ENCODE measurements at regions of chr1 and their contacts with region 1.

Region 1: DNA sequence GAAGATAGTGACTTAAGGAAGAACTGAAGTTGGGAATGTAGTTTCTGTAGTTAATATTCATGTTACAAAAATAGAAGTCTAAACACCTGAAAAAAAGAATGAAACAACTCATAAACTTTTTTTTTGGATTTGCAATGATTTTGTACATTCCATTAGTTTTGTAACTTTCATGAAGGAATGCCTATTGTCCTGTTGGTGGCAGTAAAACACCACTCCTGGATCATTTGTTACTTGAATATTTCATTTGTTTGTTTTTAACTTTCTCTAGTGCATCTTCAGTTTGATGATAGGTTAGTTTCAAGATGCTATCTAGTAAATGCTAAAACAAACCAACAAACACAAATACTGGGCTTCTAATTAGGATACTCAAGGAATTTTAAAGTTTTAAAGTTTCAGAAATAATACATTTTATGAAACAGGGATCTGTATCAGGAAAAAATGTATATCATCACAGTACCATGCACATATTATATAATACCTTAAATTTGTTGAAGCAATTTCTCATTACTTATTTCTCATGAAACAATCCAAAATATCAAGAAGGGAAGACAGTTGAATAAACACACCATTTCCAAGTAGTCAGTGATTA is 229.7 kb upstream of the CACYBP start:
- DNase-seq: no peak
- ATAC-seq: no peak
- H3K4me3 ChIP-seq: no peak overlapping the region
- H3K27ac ChIP-seq: no peak overlapping the region
- H3K4me1 ChIP-seq: no peaks in the 10 kb centered on the region
- H3K27me3 ChIP-seq: no peaks in the 10 kb centered on the region

Region 2: GRCh38 chr1:174626031-174627025 is 143.7 kb before region 1 on chr1:
- intact Hi-C with region 1: no loop called
- DNase-seq: no peak
- ATAC-seq: no peak
- H3K4me3 ChIP-seq: no peak overlapping the region
- H3K27ac ChIP-seq: no peak overlapping the region
- H3K4me1 ChIP-seq: no peaks in the 10 kb centered on the region
- H3K27me3 ChIP-seq: no peaks in the 10 kb centered on the region

Region 3: DNA sequence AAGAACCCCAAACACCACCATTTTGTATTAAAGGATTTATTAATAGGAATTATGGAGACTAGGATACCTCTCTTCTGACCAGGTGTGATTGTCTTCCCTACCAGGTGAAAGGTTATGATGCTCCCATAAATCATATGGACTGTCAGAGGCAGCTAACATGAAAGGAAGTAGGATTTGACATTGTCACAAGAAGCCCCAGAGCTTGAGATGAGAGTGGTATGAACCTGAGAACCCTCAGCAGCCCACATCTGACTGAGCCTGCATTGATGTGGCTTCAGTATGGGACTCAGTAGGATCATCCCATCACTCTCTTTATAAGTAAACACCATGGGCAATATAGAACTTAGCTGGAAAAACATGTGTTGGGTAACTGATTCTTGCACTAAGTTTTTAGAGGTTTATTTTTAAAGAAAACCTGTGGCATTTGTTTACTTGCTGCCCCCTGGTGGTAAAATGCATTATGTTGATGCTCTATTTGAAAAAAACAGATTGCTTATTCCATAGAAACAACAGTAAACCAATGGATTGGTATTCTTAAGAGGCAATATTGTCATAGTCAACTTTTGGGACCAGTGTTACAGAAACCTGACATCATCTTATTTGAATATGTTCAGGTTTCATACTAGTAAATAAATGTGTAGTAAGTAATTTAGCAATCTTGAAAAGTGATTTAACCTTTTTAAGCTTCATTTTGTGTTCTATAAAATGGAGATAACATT is 213.1 kb after region 1 on chr1:
- intact Hi-C with region 1: loop called in 2 of 4 experiments (anchors 5 to 10 kb)
- DNase-seq: no peak
- ATAC-seq: no peak
- H3K4me3 ChIP-seq: no peak overlapping the region
- H3K27ac ChIP-seq: no peak overlapping the region
- H3K4me1 ChIP-seq: no peaks in the 10 kb centered on the region
- H3K27me3 ChIP-seq: no peaks in the 10 kb centered on the region

Region 4: GRCh38 chr1:174999216-174999925 is 229.3 kb after region 1 on chr1:
- intact Hi-C with region 1: loop called in 1 of 4 experiments (anchors 5 kb)
- DNase-seq: peak; percentile 96 to 99 (median 99)
- ATAC-seq: peak; percentile 94
- H3K4me3 ChIP-seq: peak overlapping the region; percentile 50
- H3K27ac ChIP-seq: peak overlapping the region; percentile 92
- H3K4me1 ChIP-seq: no peaks in the 10 kb centered on the region
- H3K27me3 ChIP-seq: no peaks in the 10 kb centered on the region